CD4-positive, alpha-beta T cell (primary cell): ENCODE measurements at regions of chr3 and their contacts with region 1.

Region 1: DNA sequence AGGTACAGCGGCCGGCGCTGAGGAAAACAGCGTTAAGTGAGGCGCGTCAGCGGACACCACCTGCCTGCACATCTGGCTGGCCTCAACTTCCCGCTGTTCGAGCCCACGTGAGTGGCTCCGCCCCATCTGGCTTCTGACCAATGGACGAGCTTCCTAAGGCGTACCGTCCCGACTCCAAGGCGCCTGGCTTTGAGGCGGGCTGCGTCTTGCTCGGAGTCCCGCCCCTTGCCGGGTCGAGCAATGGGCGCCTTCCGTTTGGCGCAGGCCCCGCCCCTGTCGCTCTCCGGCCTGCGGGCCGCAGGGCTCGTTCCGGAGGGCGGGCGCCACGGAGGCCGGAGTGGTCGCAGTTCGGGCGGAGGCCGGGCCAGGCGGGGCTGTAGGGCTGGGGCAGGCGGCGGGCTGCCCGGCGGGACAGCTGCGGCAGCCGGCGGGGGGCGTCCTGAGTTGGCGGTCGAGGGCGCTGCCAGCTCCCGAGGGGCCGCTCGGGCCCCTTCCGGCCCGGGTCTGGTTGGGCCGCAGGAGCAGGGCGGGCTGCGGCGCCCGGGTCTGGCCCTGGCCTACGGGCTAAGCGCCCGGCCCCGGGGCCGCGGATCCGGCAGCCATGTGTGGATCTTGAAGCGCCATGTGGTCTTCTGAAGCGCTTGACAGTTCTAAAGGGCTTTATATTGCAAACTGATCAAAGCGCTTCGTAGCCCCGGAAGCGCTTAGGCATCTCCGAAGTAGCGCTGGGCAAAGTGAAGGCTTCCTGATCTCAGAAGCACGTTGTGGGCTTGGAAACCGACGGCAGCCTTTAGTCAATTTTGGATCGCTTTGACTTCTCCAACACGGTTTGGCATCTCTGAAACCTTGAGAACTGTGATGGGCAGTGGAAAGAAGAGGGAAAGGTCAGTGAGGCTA is at the start of gene TATDN2:
- DNase-seq: peak; percentile 81 to 98 (median 90)
- ATAC-seq: peak; percentile 93
- H3K4me3 ChIP-seq: peak within 1 kb of the TSS; percentile 83
- H3K4me3 Mint-ChIP-seq: peak within 1 kb of the TSS; percentile 97
- H3K27ac ChIP-seq: peak within 1 kb of the TSS; percentile 63 to 83
- H3K27ac Mint-ChIP-seq: peak within 1 kb of the TSS; percentile 90
- H3K4me1 ChIP-seq: peaks cover 56% of the 10 kb centered on the region
- H3K4me1 Mint-ChIP-seq: peaks cover 60% of the 10 kb centered on the region
- H3K27me3 ChIP-seq: no peaks in the 10 kb centered on the region
- H3K27me3 Mint-ChIP-seq: no peaks in the 10 kb centered on the region
- CTCF ChIP-seq: no peak
- total RNA-seq, gene TATDN2: 48.7 to 50.2 TPM

Region 2: GRCh38 chr3:10142707-10143566 is 105.5 kb before region 1 on chr3:
- CTCF ChIA-PET with region 1: no interaction called
- POLR2A ChIA-PET with region 1: interaction called, 14 read pairs
- intact Hi-C with region 1: loop called (anchors 2 to 5 kb)
- DNase-seq: peak in 5 of 14 experiments; percentile 1 to 54 (median 42)
- ATAC-seq: no peak
- H3K4me3 ChIP-seq: peak overlapping the region; percentile 85
- H3K4me3 Mint-ChIP-seq: peak overlapping the region; percentile 90
- H3K27ac ChIP-seq: peak overlapping the region in 1 of 2 donors; percentile 22
- H3K27ac Mint-ChIP-seq: peak overlapping the region; percentile 85
- H3K4me1 ChIP-seq: peaks cover 54% of the 10 kb centered on the region
- H3K4me1 Mint-ChIP-seq: peaks cover 40% of the 10 kb centered on the region
- H3K27me3 ChIP-seq: no peaks in the 10 kb centered on the region
- H3K27me3 Mint-ChIP-seq: no peaks in the 10 kb centered on the region
- CTCF ChIP-seq: no peak

Region 3: GRCh38 chr3:10192953-10193691 is 55.3 kb before region 1 on chr3:
- CTCF ChIA-PET with region 1: interaction called, 3 read pairs
- POLR2A ChIA-PET with region 1: interaction called, 18 read pairs
- intact Hi-C with region 1: loop called in 1 of 2 experiments (anchors 2 kb)
- DNase-seq: peak in 13 of 14 experiments; percentile 33 to 83 (median 62)
- ATAC-seq: peak; percentile 51
- H3K4me3 ChIP-seq: peak overlapping the region; percentile 7
- H3K4me3 Mint-ChIP-seq: peak overlapping the region; percentile 86
- H3K27ac ChIP-seq: peak overlapping the region; percentile 89 to 90
- H3K27ac Mint-ChIP-seq: peak overlapping the region; percentile 96
- H3K4me1 ChIP-seq: peaks cover 96% of the 10 kb centered on the region
- H3K4me1 Mint-ChIP-seq: peaks cover 81% of the 10 kb centered on the region
- H3K27me3 ChIP-seq: no peaks in the 10 kb centered on the region
- H3K27me3 Mint-ChIP-seq: no peaks in the 10 kb centered on the region
- CTCF ChIP-seq: no peak

Region 4: DNA sequence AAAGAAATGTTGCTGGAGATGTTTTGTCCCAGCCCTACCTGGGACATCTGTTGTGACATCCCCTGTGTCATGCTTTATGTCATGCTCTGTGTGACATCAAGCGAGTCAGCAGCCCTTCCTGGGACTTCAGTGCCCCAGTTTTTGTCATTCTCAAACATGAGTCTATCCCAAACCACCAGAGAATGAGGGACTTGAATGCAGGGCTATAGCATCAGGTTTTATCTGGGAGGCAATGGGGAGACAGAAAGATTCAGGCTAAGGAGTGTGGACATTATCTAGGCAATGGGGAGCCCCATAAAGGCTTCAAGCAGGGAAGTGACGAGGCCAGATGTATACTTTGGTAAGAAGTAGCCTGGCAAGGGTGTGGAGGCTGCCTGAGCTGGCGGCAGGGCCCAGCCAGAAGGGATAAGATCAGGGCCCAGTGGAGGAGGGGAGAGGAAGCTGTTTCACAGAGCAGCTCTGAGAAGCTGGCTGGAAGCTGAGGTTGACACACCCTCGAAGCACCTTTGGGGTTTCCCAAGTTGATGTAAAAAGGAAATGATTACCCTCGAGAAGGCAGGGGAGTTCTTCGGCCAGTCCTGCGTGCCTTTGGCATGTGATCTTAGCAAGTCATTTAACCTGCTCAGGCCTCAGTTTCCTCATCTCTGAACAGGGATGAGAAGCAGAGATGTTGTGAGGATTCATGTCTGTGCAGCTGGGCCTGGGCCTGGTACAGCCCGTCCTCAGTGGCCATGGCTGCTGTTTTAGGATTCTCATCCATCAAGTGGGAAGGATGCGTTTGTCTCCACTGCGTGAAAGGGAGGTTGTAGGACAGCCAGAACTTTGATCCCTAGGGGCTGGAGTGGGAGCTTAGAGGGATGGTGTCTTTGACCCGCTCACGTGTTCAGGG is 49.4 kb before region 1 on chr3:
- CTCF ChIA-PET with region 1: interaction called, 3 read pairs
- POLR2A ChIA-PET with region 1: interaction called, 18 read pairs
- intact Hi-C with region 1: loop called in 1 of 2 experiments (anchors 2 kb)
- DNase-seq: peak; percentile 50 to 94 (median 64)
- ATAC-seq: peak; percentile 81
- H3K4me3 ChIP-seq: no peak overlapping the region
- H3K4me3 Mint-ChIP-seq: peak overlapping the region; percentile 75
- H3K27ac ChIP-seq: peak overlapping the region; percentile 86 to 95
- H3K27ac Mint-ChIP-seq: peak overlapping the region; percentile 93
- H3K4me1 ChIP-seq: peaks cover 83% of the 10 kb centered on the region
- H3K4me1 Mint-ChIP-seq: peaks cover 71% of the 10 kb centered on the region
- H3K27me3 ChIP-seq: no peaks in the 10 kb centered on the region
- H3K27me3 Mint-ChIP-seq: no peaks in the 10 kb centered on the region
- CTCF ChIP-seq: no peak

Region 5: GRCh38 chr3:10286596-10287330 is 38.3 kb after region 1 on chr3:
- CTCF ChIA-PET with region 1: interaction called, 4 read pairs
- POLR2A ChIA-PET with region 1: no interaction called
- intact Hi-C with region 1: loop called in 1 of 2 experiments (anchors 2 kb)
- DNase-seq: peak in 5 of 14 experiments; percentile 28 to 71 (median 61)
- ATAC-seq: peak; percentile 39
- H3K4me3 ChIP-seq: no peak overlapping the region
- H3K4me3 Mint-ChIP-seq: no peak overlapping the region
- H3K27ac ChIP-seq: peak overlapping the region in 1 of 2 donors; percentile 21
- H3K27ac Mint-ChIP-seq: peak overlapping the region; percentile 50
- H3K4me1 ChIP-seq: peaks cover 19% of the 10 kb centered on the region
- H3K4me1 Mint-ChIP-seq: peaks cover 39% of the 10 kb centered on the region
- H3K27me3 ChIP-seq: no peaks in the 10 kb centered on the region
- H3K27me3 Mint-ChIP-seq: no peaks in the 10 kb centered on the region
- CTCF ChIP-seq: peak; percentile 52